Naive thymus-derived CD4-positive, alpha-beta T cell (primary cell): ENCODE measurements at regions of chr15 and their contacts with region 1.

Region 1: DNA sequence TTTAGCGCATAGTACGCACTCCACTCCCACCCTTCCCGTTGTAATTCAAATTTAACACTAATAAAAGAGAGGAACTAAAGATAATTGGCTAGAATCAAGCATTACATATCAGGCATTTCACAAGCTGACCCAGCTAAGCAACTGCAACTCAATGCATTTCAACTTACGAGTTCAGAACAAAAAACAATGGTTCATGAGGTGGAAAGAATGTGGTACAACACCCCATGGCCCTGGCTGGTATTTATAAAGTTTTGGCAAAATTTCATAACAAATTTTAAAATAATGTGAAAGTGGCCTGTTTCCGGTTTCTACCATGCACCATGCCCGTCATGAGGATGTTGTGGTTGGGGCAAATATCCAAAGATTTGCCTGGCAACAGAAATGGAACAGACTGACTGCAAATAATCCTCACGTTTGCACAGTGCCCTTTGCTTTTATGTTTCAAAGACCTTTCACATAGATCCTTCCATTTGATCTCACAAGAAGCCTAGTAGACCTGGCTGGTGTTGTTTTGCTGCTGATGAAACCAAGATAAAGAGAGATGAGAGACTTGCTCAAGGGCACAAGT is 455.3 kb upstream of the NR2F2 start:
- DNase-seq: peak in 7 of 9 donors; percentile 16 to 63 (median 42)
- ATAC-seq: peak; percentile 60
- H3K4me3 ChIP-seq: no peak overlapping the region
- H3K4me3 Mint-ChIP-seq: peak overlapping the region in 5 of 10 donors; percentile 24 to 55 (median 42)
- H3K27ac ChIP-seq: no peak overlapping the region
- H3K27ac Mint-ChIP-seq: peak overlapping the region in 6 of 9 donors; percentile 12 to 85 (median 40)
- H3K4me1 ChIP-seq: peaks cover 4 to 11% of the 10 kb centered on the region in 2 donors
- H3K4me1 Mint-ChIP-seq: peaks cover 11 to 52% (median 34%) of the 10 kb centered on the region in 7 donors
- H3K27me3 ChIP-seq: no peaks in the 10 kb centered on the region
- H3K27me3 Mint-ChIP-seq: peaks cover 0 to 13% (median 4%) of the 10 kb centered on the region in 5 donors

Region 2: GRCh38 chr15:95734422-95735316 is 140.5 kb before region 1 on chr15:
- CTCF ChIA-PET with region 1: no interaction called
- POLR2A ChIA-PET with region 1: no interaction called
- intact Hi-C with region 1: loop called in 1 of 2 experiments (anchors 10 kb)
- DNase-seq: peak in 2 of 9 donors; percentile 11 to 14
- ATAC-seq: no peak
- H3K4me3 ChIP-seq: peak overlapping the region; percentile 15
- H3K4me3 Mint-ChIP-seq: peak overlapping the region; percentile 17 to 77 (median 69)
- H3K27ac ChIP-seq: peak overlapping the region; percentile 32
- H3K27ac Mint-ChIP-seq: peak overlapping the region; percentile 21 to 92 (median 83)
- H3K4me1 ChIP-seq: peaks cover 13 to 26% of the 10 kb centered on the region in 2 donors
- H3K4me1 Mint-ChIP-seq: peaks cover 19 to 44% (median 35%) of the 10 kb centered on the region in 7 donors
- H3K27me3 ChIP-seq: no peaks in the 10 kb centered on the region
- H3K27me3 Mint-ChIP-seq: peaks cover 0 to 6% (median 0%) of the 10 kb centered on the region in 5 donors

Region 3: GRCh38 chr15:95839367-95839782 is 35.8 kb before region 1 on chr15:
- CTCF ChIA-PET with region 1: no interaction called
- POLR2A ChIA-PET with region 1: no interaction called
- intact Hi-C with region 1: loop called in 1 of 2 experiments (anchors 1 kb)
- DNase-seq: peak in 6 of 9 donors; percentile 8 to 53 (median 39)
- ATAC-seq: peak; percentile 71
- H3K4me3 ChIP-seq: no peak overlapping the region
- H3K4me3 Mint-ChIP-seq: peak overlapping the region in 9 of 10 donors; percentile 0 to 81 (median 55)
- H3K27ac ChIP-seq: peak overlapping the region; percentile 24
- H3K27ac Mint-ChIP-seq: peak overlapping the region; percentile 40 to 95 (median 79)
- H3K4me1 ChIP-seq: peaks cover 21 to 22% of the 10 kb centered on the region in 2 donors
- H3K4me1 Mint-ChIP-seq: peaks cover 12 to 49% (median 43%) of the 10 kb centered on the region in 7 donors
- H3K27me3 ChIP-seq: no peaks in the 10 kb centered on the region
- H3K27me3 Mint-ChIP-seq: peaks cover 0 to 7% (median 0%) of the 10 kb centered on the region in 5 donors

Region 4: GRCh38 chr15:96064351-96064756 is 189.1 kb after region 1 on chr15:
- CTCF ChIA-PET with region 1: no interaction called
- POLR2A ChIA-PET with region 1: no interaction called
- intact Hi-C with region 1: loop called in 1 of 2 experiments (anchors 10 kb)
- DNase-seq: no peak
- ATAC-seq: no peak
- H3K4me3 ChIP-seq: no peak overlapping the region
- H3K4me3 Mint-ChIP-seq: no peak overlapping the region
- H3K27ac ChIP-seq: no peak overlapping the region
- H3K27ac Mint-ChIP-seq: no peak overlapping the region
- H3K4me1 ChIP-seq: no peaks in the 10 kb centered on the region
- H3K4me1 Mint-ChIP-seq: no peaks in the 10 kb centered on the region
- H3K27me3 ChIP-seq: no peaks in the 10 kb centered on the region
- H3K27me3 Mint-ChIP-seq: peaks cover 6 to 38% (median 13%) of the 10 kb centered on the region in 5 donors